ENCODE measurements at regions of chrX and their contacts with region 1.

Region 1: GRCh38 chrX:71541210-71542022 is 8.5 kb downstream of the OGT start:
- DNase-seq: no peak
- ATAC-seq: no peak
- H3K4me3 ChIP-seq: no peak overlapping the region
- H3K27ac ChIP-seq: peak overlapping the region in 3 of 10 donors; percentile 28 to 54 (median 53)
- H3K4me1 ChIP-seq: peaks cover 3 to 95% (median 83%) of the 10 kb centered on the region in 9 donors
- H3K27me3 ChIP-seq: peaks cover 0 to 28% (median 0%) of the 10 kb centered on the region in 7 donors
- CTCF ChIP-seq: no peak

Region 2: GRCh38 chrX:71454222-71454621 is 87.2 kb before region 1 on chrX:
- intact Hi-C with region 1: loop called in 1 of 10 experiments (anchors 10 kb)
- DNase-seq: no peak
- ATAC-seq: no peak
- H3K4me3 ChIP-seq: no peak overlapping the region
- H3K27ac ChIP-seq: no peak overlapping the region
- H3K4me1 ChIP-seq: no peaks in the 10 kb centered on the region
- H3K27me3 ChIP-seq: no peaks in the 10 kb centered on the region
- CTCF ChIP-seq: no peak

Region 3: GRCh38 chrX:71606536-71607216 is 65.3 kb after region 1 on chrX:
- intact Hi-C with region 1: loop called in 1 of 10 experiments (anchors 10 kb)
- DNase-seq: no peak
- ATAC-seq: peak in 1 of 8 donors; percentile 25
- H3K4me3 ChIP-seq: no peak overlapping the region
- H3K27ac ChIP-seq: peak overlapping the region in 1 of 10 donors; percentile 41
- H3K4me1 ChIP-seq: peaks cover 0 to 17% (median 6%) of the 10 kb centered on the region in 9 donors
- H3K27me3 ChIP-seq: no peaks in the 10 kb centered on the region
- CTCF ChIP-seq: no peak

Region 4: GRCh38 chrX:71664889-71665491 is 123.6 kb after region 1 on chrX:
- intact Hi-C with region 1: no loop called
- DNase-seq: no peak
- ATAC-seq: peak in 1 of 8 donors; percentile 27
- H3K4me3 ChIP-seq: no peak overlapping the region
- H3K27ac ChIP-seq: no peak overlapping the region
- H3K4me1 ChIP-seq: no peaks in the 10 kb centered on the region
- H3K27me3 ChIP-seq: no peaks in the 10 kb centered on the region
- CTCF ChIP-seq: no peak

Measured in heart right ventricle (tissue), 16 donors.